Activated CD8-positive, alpha-beta T cell treated with anti-CD3 and anti-CD28 coated beads for 36 hours (primary cell): ENCODE measurements at regions of chr1 and their contacts with region 1.

Region 1: DNA sequence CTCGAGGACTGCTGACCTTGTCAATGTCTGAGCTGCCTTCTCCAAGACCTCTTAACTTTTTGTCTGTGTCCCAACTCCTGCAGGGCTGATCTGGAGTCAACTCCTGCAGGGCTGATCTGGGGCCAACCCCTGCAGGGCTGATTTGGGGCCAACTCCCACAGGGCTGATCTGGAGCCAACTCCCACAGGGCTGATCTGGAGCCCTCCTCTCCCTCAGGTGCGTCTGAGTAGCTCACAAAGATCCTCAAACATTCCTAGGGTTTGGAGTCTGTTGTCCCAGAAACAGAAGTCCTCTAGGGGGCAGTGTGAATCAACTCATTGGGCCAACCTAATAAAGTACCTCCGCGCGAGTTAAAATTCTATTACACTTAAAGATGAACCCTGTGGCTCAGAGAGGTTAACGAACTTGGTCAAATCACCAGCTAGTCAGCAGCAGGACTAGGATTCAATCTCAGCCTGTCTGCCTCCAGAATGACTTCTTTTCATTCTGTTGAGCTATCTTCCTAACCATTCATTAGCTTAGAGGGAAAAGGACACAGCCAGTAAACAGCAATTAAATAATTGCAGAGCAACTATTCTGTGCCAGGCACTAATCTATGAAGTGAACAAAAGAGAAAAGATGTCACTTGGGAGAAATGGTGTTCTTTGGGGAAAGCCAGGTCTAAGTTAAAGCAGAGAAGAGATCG is 17.2 kb upstream of the RLF start:
- DNase-seq: peak; percentile 71
- ATAC-seq: peak; percentile 84
- H3K4me3 Mint-ChIP-seq: no peak overlapping the region
- H3K27ac Mint-ChIP-seq: no peak overlapping the region
- H3K4me1 Mint-ChIP-seq: peaks cover 3% of the 10 kb centered on the region
- H3K27me3 Mint-ChIP-seq: peaks cover 23% of the 10 kb centered on the region
- CTCF ChIP-seq: peak; percentile 90

Region 2: GRCh38 chr1:39901698-39902459 is 242.2 kb before region 1 on chr1 and contains the start of gene MYCL:
- CTCF ChIA-PET with region 1: no interaction called
- POLR2A ChIA-PET with region 1: no interaction called
- intact Hi-C with region 1: no loop called
- DNase-seq: peak; percentile 85
- ATAC-seq: peak; percentile 89
- H3K4me3 Mint-ChIP-seq: peak within 1 kb of the TSS; percentile 70
- H3K27ac Mint-ChIP-seq: no peak within 1 kb of the TSS
- H3K4me1 Mint-ChIP-seq: no peaks in the 10 kb centered on the region
- H3K27me3 Mint-ChIP-seq: peaks cover 55% of the 10 kb centered on the region
- CTCF ChIP-seq: peak; percentile 75
- total RNA-seq, gene MYCL: 0.13 to 0.20 TPM

Region 3: DNA sequence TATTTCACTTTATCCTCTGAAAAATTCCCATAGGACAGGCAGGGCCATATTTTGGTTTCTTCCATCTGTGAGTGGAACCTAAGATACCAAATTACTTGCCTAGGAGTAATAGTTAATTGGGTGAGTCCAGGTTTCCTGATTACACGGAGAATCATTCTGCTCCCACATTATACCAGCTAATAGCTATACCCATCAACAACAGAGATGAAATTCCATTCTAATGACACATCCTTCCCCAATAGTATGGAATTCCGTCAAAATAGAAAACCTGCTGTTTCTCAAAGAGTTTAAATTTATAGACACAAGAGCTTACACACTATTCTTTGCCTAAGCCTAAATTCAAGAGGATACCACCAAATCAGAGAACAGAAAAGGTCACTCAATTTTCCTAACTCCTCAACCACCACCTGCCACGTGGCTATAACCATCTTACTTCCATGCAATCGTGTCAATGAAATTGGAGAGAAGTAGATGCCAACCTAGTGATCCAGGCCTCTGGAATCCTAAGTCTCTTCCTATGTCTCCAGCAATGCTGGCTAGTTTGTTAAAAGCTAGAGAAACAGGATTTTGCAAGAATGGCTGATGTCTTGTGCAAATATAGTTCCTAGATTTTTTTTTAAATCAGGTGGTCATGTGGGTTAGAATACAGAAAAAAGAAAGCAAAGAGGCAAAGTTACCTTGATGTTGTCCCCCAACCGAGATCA is 53.2 kb before region 1 on chr1:
- CTCF ChIA-PET with region 1: interaction called, 15 read pairs
- POLR2A ChIA-PET with region 1: no interaction called
- intact Hi-C with region 1: no loop called
- DNase-seq: no peak
- ATAC-seq: no peak
- H3K4me3 Mint-ChIP-seq: no peak overlapping the region
- H3K27ac Mint-ChIP-seq: no peak overlapping the region
- H3K4me1 Mint-ChIP-seq: peaks cover 20% of the 10 kb centered on the region
- H3K27me3 Mint-ChIP-seq: no peaks in the 10 kb centered on the region
- CTCF ChIP-seq: no peak

Region 4: DNA sequence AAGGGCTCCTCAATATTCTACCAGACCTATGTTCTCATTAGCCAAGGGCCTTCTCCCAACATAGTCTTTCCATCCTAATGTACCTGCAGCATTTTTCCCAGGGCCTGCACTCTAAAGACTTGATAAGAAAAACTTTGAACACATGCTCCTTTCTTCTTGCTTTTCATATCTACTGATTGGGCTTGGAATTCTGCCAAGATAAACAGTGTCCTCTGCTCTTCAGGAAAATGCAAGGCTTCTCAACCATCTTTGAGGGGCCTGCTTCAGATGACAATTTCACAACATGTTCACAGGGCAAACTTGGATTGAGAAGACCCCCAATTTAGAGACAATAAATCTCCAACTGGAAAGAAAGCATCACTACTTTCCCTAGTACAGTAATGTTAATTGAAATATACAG is 21.2 kb before region 1 on chr1:
- CTCF ChIA-PET with region 1: interaction called, 17 read pairs
- POLR2A ChIA-PET with region 1: no interaction called
- intact Hi-C with region 1: no loop called
- DNase-seq: no peak
- ATAC-seq: no peak
- H3K4me3 Mint-ChIP-seq: no peak overlapping the region
- H3K27ac Mint-ChIP-seq: no peak overlapping the region
- H3K4me1 Mint-ChIP-seq: no peaks in the 10 kb centered on the region
- H3K27me3 Mint-ChIP-seq: peaks cover 4% of the 10 kb centered on the region
- CTCF ChIP-seq: no peak

Region 5: GRCh38 chr1:40161125-40161887 is 17.3 kb after region 1 on chr1 and contains the start of gene RLF:
- CTCF ChIA-PET with region 1: interaction called, 13 read pairs
- POLR2A ChIA-PET with region 1: no interaction called
- intact Hi-C with region 1: no loop called
- DNase-seq: peak; percentile 97
- ATAC-seq: peak; percentile 90
- H3K4me3 Mint-ChIP-seq: no peak within 1 kb of the TSS
- H3K27ac Mint-ChIP-seq: no peak within 1 kb of the TSS
- H3K4me1 Mint-ChIP-seq: peaks cover 5% of the 10 kb centered on the region
- H3K27me3 Mint-ChIP-seq: no peaks in the 10 kb centered on the region
- CTCF ChIP-seq: no peak
- total RNA-seq, gene RLF: 21.2 to 21.3 TPM

Region 6: DNA sequence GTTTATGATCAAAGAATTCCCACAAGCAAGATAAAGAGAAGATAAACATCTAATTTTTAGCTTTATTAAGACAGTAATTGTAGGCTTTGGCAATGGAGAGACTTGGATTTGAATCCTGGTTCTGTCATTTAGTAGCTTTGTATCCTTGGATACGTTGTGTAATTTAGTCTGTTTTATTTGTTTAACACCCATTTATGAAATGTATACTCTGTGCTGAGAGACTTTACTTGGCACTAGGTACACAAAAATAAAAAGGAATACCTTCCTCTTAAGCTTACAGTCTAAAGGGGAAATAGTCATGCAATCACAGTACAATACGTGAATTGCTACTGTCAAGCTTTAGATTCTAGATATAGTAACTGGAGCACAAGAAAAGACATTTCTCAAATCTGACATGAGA is 137.8 kb after region 1 on chr1:
- CTCF ChIA-PET with region 1: interaction called, 10 read pairs
- POLR2A ChIA-PET with region 1: no interaction called
- intact Hi-C with region 1: no loop called
- DNase-seq: no peak
- ATAC-seq: no peak
- H3K4me3 Mint-ChIP-seq: no peak overlapping the region
- H3K27ac Mint-ChIP-seq: no peak overlapping the region
- H3K4me1 Mint-ChIP-seq: no peaks in the 10 kb centered on the region
- H3K27me3 Mint-ChIP-seq: no peaks in the 10 kb centered on the region
- CTCF ChIP-seq: no peak

Region 7: DNA sequence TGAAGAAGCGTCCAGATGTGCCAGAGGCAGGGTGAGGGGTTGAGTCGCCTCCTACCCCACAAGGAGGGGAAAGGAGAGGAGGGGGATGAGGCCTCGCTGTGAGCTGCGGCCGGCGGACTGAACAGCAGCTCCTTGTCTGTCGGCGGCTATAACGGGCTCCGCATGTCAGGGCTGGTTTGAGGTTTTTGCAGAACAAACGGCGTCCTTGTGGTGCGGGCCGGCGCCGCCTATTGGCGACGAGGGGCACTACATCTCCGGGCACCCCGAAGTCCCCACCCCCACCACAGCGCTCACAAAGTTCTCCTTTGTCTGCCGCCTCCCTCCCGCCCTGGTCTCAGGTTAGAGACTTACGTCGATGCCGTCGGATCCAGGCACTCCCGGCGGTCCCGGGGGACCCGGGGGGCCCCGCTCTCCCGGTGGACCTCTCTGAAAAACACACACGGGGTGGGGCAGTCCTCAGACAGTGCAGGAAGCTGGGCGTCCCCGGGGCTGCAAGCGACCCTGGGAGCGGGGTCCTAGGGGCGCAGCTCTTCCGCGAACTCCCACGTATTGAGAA is 171.3 kb after region 1 on chr1:
- CTCF ChIA-PET with region 1: interaction called, 28 read pairs
- POLR2A ChIA-PET with region 1: no interaction called
- intact Hi-C with region 1: no loop called
- DNase-seq: peak; percentile 92
- ATAC-seq: peak; percentile 82
- H3K4me3 Mint-ChIP-seq: peak overlapping the region; percentile 79
- H3K27ac Mint-ChIP-seq: no peak overlapping the region
- H3K4me1 Mint-ChIP-seq: peaks cover 31% of the 10 kb centered on the region
- H3K27me3 Mint-ChIP-seq: peaks cover 9% of the 10 kb centered on the region
- CTCF ChIP-seq: peak; percentile 93

Region 8: DNA sequence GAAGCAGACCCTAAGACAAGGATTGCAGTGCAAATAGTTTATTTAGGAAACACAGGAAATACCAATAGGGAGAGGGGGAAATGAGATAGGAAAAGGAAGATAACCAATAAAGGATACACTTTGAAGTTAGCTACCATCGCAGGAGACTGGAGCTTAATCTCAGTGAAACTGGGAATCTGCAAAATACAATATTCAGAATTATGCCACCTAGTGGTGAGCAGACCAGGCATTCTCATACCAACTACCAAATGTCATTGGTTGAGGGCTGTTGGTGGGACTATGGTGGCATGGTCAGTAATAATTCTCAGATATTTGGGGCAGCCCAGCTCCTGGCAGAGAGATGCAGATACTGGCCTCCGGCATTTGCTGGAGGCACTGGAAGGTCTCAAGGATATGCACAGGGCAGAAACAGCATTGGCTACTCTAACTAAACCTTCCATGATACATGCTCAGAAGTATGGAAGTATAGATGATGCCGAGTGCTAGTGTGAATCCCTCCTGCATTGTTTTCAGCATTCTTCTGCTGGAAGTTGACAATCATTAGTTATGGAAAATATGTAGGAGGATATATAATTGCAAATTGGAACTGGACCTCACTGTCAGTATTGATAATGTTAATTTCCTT is 294.5 kb after region 1 on chr1:
- CTCF ChIA-PET with region 1: interaction called, 15 read pairs
- POLR2A ChIA-PET with region 1: no interaction called
- intact Hi-C with region 1: no loop called
- DNase-seq: peak; percentile 37
- ATAC-seq: no peak
- H3K4me3 Mint-ChIP-seq: no peak overlapping the region
- H3K27ac Mint-ChIP-seq: no peak overlapping the region
- H3K4me1 Mint-ChIP-seq: peaks cover 2% of the 10 kb centered on the region
- H3K27me3 Mint-ChIP-seq: no peaks in the 10 kb centered on the region
- CTCF ChIP-seq: peak; percentile 82